ENCODE measurements at regions of chr4 and their contacts with region 1.

Region 1: GRCh38 chr4:10018818-10019461 is 2.4 kb downstream of the SLC2A9 start:
- DNase-seq: peak; percentile 99
- ATAC-seq: peak; percentile 93 to 98 (median 96)
- H3K4me3 ChIP-seq: peak overlapping the region in 9 of 10 donors; percentile 8 to 56 (median 48)
- H3K27ac ChIP-seq: peak overlapping the region; percentile 83 to 93 (median 90)
- H3K4me1 ChIP-seq: peaks cover 11 to 59% (median 45%) of the 10 kb centered on the region in 9 donors
- H3K27me3 ChIP-seq: no peaks in the 10 kb centered on the region
- CTCF ChIP-seq: peak; percentile 98 to 100 (median 99)

Region 2: DNA sequence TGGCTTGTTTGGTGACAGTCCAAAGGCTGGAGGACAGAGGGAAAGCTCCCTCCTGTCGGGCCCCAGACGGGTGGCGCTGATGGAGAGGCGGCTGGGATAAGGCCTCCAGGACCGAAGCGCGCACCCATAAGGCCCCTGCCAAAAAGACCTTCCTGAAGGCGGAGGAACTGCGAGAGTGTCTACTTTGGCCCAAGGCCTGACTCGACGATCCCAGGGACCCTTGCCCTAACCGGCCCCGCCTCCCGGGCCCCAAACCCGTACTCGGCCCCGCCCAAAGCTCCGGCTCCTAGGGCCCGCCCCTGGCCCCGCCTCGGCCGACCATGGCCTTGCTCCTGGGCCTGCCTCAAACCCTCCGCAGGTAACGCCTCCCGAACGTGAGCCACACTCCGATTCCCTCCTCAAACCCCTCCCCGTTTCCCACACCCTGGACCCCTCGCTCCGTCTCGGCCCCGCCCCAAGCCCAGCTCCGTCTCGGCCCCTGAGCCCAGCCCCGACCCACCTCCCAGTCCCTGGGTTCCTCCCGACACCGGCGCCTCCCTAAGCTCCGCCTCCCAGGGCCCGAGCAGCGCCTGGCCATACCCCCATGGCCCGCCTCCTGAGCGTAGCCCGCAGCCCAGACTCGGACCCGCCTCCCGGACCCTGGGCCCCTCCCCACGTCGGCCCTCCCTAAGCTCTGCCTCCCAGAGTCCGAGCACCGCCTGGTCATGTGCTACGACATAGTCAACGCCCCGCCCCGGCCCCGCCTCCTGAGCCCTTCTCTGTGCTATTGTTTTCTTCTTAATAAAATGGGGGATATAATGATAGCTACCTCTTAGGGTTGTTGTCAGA is 327.5 kb before region 1 on chr4:
- intact Hi-C with region 1: loop called in 1 of 10 experiments (anchors 10 kb)
- DNase-seq: peak; percentile 97
- ATAC-seq: peak; percentile 100
- H3K4me3 ChIP-seq: peak overlapping the region; percentile 8 to 73 (median 65)
- H3K27ac ChIP-seq: peak overlapping the region in 9 of 10 donors; percentile 58 to 82 (median 79)
- H3K4me1 ChIP-seq: peaks cover 0 to 6% (median 3%) of the 10 kb centered on the region in 9 donors
- H3K27me3 ChIP-seq: peaks cover 0 to 1% (median 0%) of the 10 kb centered on the region in 7 donors
- CTCF ChIP-seq: no peak

Region 3: GRCh38 chr4:9762823-9763475 is 256.0 kb before region 1 on chr4:
- intact Hi-C with region 1: loop called in 8 of 10 experiments (anchors 2 to 5 kb)
- DNase-seq: peak in 1 of 2 donors; percentile 70
- ATAC-seq: no peak
- H3K4me3 ChIP-seq: no peak overlapping the region
- H3K27ac ChIP-seq: no peak overlapping the region
- H3K4me1 ChIP-seq: no peaks in the 10 kb centered on the region
- H3K27me3 ChIP-seq: peaks cover 0 to 17% (median 13%) of the 10 kb centered on the region in 7 donors
- CTCF ChIP-seq: peak; percentile 30 to 82 (median 70)

Region 4: GRCh38 chr4:9919047-9919446 is 99.9 kb before region 1 on chr4:
- intact Hi-C with region 1: loop called in 3 of 10 experiments (anchors 2 to 10 kb)
- DNase-seq: no peak
- ATAC-seq: peak in 5 of 8 donors; percentile 5 to 23 (median 12)
- H3K4me3 ChIP-seq: no peak overlapping the region
- H3K27ac ChIP-seq: peak overlapping the region in 3 of 10 donors; percentile 17 to 64 (median 34)
- H3K4me1 ChIP-seq: peaks cover 0 to 17% (median 0%) of the 10 kb centered on the region in 9 donors
- H3K27me3 ChIP-seq: no peaks in the 10 kb centered on the region
- CTCF ChIP-seq: no peak

Region 5: GRCh38 chr4:9970392-9971013 is 48.4 kb before region 1 on chr4:
- intact Hi-C with region 1: no loop called
- DNase-seq: no peak
- ATAC-seq: no peak
- H3K4me3 ChIP-seq: no peak overlapping the region
- H3K27ac ChIP-seq: no peak overlapping the region
- H3K4me1 ChIP-seq: no peaks in the 10 kb centered on the region
- H3K27me3 ChIP-seq: no peaks in the 10 kb centered on the region
- CTCF ChIP-seq: no peak

Region 6: GRCh38 chr4:9983211-9983610 is 35.7 kb before region 1 on chr4:
- intact Hi-C with region 1: no loop called
- DNase-seq: no peak
- ATAC-seq: no peak
- H3K4me3 ChIP-seq: no peak overlapping the region
- H3K27ac ChIP-seq: no peak overlapping the region
- H3K4me1 ChIP-seq: peaks cover 0 to under 1% (median 0%) of the 10 kb centered on the region in 9 donors
- H3K27me3 ChIP-seq: no peaks in the 10 kb centered on the region
- CTCF ChIP-seq: no peak

Region 7: GRCh38 chr4:10063544-10064300 is 44.8 kb after region 1 on chr4:
- intact Hi-C with region 1: loop called (anchors 1 to 5 kb)
- DNase-seq: peak; percentile 53 to 66
- ATAC-seq: peak; percentile 87 to 98 (median 97)
- H3K4me3 ChIP-seq: no peak overlapping the region
- H3K27ac ChIP-seq: peak overlapping the region in 6 of 10 donors; percentile 15 to 65 (median 54)
- H3K4me1 ChIP-seq: peaks cover 3 to 13% (median 10%) of the 10 kb centered on the region in 9 donors
- H3K27me3 ChIP-seq: no peaks in the 10 kb centered on the region
- CTCF ChIP-seq: peak; percentile 59 to 89 (median 80)

Region 8: DNA sequence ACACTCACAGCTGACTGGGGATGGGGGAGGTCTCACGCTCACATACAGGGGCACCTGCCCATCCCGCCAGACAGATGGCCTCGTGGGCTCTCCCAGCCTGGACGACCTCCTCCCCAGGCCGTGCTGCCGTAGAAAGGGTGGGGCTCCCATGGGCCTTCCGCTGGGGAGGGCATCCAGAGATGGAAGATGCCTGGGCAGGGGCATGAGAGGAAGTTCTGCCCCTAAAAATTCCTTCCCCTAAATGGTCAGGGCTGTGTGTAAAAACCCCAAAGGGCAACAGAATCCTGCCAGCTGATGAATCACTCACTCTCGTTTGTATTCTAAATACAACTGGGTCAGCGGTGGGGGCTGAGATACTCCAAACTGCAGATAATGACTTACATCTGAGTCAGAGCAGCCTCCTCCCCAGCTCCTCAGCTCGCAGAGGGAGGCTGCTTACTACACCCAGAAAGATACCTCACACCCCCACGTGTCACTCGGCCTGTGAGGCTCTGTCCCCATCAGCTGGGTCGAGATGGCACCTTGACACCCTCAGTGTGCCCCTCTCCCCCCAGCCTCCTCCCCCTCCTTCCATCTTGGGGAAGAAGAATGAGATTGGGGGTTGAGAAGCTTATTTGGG is 87.6 kb after region 1 on chr4:
- intact Hi-C with region 1: loop called in 3 of 10 experiments (anchors 5 to 10 kb)
- DNase-seq: peak in 1 of 2 donors; percentile 65
- ATAC-seq: peak; percentile 46 to 90 (median 73)
- H3K4me3 ChIP-seq: peak overlapping the region in 2 of 10 donors; percentile 5 to 16
- H3K27ac ChIP-seq: peak overlapping the region in 9 of 10 donors; percentile 50 to 83 (median 77)
- H3K4me1 ChIP-seq: peaks cover 39 to 98% (median 93%) of the 10 kb centered on the region in 9 donors
- H3K27me3 ChIP-seq: no peaks in the 10 kb centered on the region
- CTCF ChIP-seq: no peak

Region 9: GRCh38 chr4:10403633-10404445 is 384.9 kb after region 1 on chr4:
- intact Hi-C with region 1: loop called in 1 of 10 experiments (anchors 10 kb)
- DNase-seq: peak in 1 of 2 donors; percentile 11
- ATAC-seq: peak in 4 of 8 donors; percentile 56 to 67 (median 63)
- H3K4me3 ChIP-seq: no peak overlapping the region
- H3K27ac ChIP-seq: no peak overlapping the region
- H3K4me1 ChIP-seq: peaks cover 0 to 10% (median 0%) of the 10 kb centered on the region in 9 donors
- H3K27me3 ChIP-seq: no peaks in the 10 kb centered on the region
- CTCF ChIP-seq: peak in 8 of 9 donors; percentile 19 to 70 (median 59)